Cardiac septum (tissue), 1 donor: ENCODE measurements at regions of chr14 and their contacts with region 1.

Region 1: GRCh38 chr14:56491299-56492285 is 88.0 kb upstream of the TMEM260 start:
- DNase-seq: no peak

Region 2: GRCh38 chr14:55546212-55546874 is 945.2 kb before region 1 on chr14:
- intact Hi-C with region 1: no loop called
- DNase-seq: no peak

Region 3: DNA sequence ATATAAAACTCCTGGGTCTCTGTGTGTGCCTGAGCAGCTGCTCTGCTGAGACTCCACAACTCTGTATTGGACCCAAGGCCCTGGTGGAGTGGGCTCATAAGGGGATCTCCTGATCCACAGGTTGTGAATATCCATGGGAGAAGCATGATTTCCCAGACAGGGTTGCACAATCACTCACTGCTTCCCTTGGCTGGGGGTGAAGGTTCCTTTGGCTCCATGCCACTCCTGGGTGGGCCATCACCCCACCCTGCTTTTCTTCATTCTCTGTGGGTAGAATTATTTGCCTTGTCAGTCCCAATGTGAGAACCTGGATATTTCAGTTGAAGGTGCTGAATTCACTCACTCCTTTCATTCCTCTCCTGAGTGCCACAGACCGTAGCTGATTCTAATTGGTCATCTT is 117.2 kb before region 1 on chr14:
- intact Hi-C with region 1: no loop called
- DNase-seq: no peak

Region 4: GRCh38 chr14:56422703-56423213 is 68.8 kb before region 1 on chr14:
- intact Hi-C with region 1: no loop called
- DNase-seq: no peak

Region 5: DNA sequence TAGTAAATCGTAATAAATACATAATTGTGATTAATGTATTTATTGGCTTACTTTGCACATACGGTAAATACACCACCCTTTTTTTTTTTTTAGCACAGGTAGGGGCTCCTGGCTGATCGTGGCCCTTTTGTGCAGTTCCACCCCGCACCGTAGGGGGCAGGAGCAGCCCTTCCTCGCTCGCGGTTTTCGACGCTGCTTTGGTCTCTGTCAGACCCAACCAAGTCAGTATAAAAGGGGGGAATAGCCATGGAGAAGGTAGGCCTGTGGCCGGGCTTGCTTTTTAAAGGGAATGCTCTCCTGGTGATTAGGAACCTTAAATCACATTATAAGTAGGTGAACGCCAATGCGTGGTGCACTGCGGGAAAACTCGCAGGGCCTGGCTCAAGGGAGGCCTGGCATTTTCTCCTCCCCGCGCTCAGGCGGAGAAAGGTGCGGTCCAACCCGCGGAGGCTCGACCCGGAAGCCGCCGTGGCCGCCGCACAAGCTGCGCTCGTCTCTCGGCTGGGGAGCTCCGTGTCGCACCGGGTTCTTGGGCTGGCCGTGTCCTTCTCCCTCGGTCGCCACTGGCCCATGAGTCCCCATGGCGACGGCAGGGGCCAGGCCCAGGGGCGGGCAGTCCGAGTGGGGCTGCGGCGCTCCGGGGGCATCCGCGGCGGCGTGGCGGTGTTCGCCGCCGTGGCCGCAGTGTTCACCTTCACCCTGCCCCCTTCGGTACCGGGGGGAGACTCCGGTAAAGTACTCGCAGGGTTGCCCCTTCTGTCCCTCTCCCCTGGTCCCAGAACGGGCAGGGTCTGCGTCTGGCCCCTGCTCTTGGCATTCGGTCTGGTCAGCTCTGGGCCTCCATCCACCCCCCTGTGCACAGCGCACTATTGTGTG is 88.0 kb after region 1 on chr14 and contains the start of gene TMEM260:
- intact Hi-C with region 1: loop called (anchors 10 kb)
- DNase-seq: peak; percentile 95
- total RNA-seq, gene TMEM260: 6.8 TPM

Region 6: DNA sequence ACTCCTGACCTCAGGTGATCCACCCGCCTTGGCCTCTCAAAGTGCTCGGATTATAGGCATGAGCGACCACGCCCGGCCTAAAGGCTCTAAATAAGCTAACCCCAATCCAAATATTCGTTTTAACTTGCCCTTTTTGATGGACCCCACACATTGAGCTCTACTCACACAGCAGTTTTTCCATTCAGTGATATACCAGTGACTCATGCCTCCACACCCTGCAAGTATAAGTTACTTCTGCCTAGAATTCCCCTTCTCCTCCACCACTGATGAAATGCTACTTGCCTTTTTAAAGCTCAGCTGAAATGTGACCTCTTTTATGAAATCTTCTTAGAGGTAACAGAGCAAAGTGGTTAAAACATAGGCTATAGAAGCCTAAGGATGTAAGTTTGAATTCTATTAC is 708.3 kb after region 1 on chr14:
- intact Hi-C with region 1: loop called (anchors 5 kb)
- DNase-seq: no peak

Region 7: GRCh38 chr14:57317316-57317715 is 825.7 kb after region 1 on chr14:
- intact Hi-C with region 1: loop called (anchors 5 kb)
- DNase-seq: peak; percentile 78